HCT116 (cell line): ENCODE measurements at regions of chr1 and their contacts with region 1.

Region 1: GRCh38 chr1:241895013-241895412 is 47.0 kb downstream of the EXO1 start:
- DNase-seq: no peak
- ATAC-seq: no peak
- H3K4me3 ChIP-seq: no peak overlapping the region
- H3K27ac ChIP-seq: no peak overlapping the region
- H3K4me1 ChIP-seq: no peaks in the 10 kb centered on the region
- H3K27me3 ChIP-seq: no peaks in the 10 kb centered on the region
- CTCF ChIP-seq: no peak
- POLR2A ChIP-seq: no peak
- RAD21 ChIP-seq: no peak

Region 2: DNA sequence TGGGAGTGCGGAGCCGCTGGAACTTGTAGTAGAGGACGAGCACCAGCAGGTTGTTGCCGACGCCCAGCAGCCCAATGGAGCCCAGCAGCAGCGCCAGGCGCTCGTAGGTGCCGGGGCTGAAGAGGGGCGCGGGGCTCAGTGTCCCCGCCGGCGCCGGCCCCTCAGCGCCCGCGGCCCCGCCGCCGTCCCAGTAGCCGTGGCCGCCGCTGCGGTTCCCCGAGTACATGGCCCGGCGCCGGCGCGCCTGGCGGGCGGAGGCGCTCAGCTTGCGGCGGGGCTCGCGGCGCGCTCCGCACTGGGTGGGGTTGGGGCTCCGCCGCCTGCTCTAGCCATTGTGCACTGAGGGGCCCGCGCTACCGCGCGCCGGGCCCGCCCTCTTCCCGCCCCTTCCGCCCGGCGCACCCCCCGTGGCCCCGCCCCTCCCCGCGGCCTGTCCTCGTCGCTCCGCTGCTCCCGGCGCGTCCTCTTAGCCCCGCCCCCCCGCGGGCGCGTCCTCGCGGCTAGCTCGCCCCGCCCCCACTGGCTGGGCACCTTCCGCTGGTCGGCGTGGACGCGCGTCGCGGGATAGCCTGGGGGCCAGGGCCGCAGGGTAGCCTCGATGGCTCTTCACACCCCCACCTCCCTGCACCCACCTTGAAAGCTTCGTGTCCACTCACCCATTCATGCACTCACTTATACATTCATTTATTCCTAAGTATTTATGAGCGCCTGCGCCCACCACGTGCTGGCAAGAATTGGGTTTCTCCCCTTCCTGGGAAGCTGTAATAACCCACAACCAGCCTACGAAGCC is 254.8 kb before region 1 on chr1 and contains the starts of genes CHML and OPN3:
- CTCF ChIA-PET with region 1: no interaction called
- POLR2A ChIA-PET with region 1: no interaction called
- RAD21 ChIA-PET with region 1: no interaction called
- intact Hi-C with region 1: no loop called
- DNase-seq: peak; percentile 65
- ATAC-seq: peak; percentile 96
- H3K4me3 ChIP-seq: peak within 1 kb of the TSS; percentile 75 to 88
- H3K27ac ChIP-seq: peak within 1 kb of the TSS; percentile 57
- H3K4me1 ChIP-seq: peaks cover 5 to 29% of the 10 kb centered on the region in 2 experiments; a peak in 3 of 4 replicates
- H3K27me3 ChIP-seq: no peaks in the 10 kb centered on the region
- CTCF ChIP-seq: no peak
- POLR2A ChIP-seq: peak; percentile 65
- RAD21 ChIP-seq: no peak
- total RNA-seq, gene CHML: 9.7 TPM
- total RNA-seq, gene OPN3: 6.1 TPM

Region 3: DNA sequence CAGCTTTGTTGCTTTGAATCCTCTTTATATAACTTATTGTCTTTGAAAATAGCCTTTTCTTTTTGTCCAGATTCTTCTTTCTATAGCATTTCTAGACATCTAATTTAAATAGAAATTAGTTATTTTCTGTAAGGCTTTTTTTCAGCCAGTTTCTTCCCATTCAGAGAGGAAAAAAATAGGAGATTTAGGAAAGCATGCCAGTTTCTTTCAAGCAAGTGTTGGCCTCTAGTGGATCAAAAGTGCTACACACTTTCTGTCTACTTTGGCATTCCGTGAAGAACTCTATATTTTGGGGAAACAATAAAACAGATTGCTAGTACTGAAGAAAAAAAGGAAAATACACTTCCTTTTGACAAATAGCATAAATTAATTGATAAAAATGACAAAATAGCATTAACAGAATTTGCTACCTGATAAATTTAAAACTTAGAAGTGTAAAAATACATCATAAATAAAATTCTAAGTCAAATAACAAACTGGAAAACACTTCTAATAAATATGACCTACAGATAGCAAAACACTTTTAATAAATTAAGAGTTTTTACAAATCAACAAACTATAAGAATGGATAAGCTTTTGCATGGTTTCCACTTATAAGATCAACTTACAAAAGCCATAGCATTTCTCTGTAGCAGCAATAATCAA is 60.2 kb before region 1 on chr1:
- CTCF ChIA-PET with region 1: no interaction called
- POLR2A ChIA-PET with region 1: no interaction called
- RAD21 ChIA-PET with region 1: no interaction called
- intact Hi-C with region 1: no loop called
- DNase-seq: peak; percentile 26
- ATAC-seq: peak; percentile 67
- H3K4me3 ChIP-seq: no peak overlapping the region
- H3K27ac ChIP-seq: no peak overlapping the region
- H3K4me1 ChIP-seq: no peaks in the 10 kb centered on the region
- H3K27me3 ChIP-seq: no peaks in the 10 kb centered on the region
- CTCF ChIP-seq: peak; percentile 63 to 70 (median 66); a peak in 5 of 6 replicates
- POLR2A ChIP-seq: no peak
- RAD21 ChIP-seq: peak; percentile 79

Region 4: GRCh38 chr1:241985787-241986186 is 90.8 kb after region 1 on chr1:
- CTCF ChIA-PET with region 1: interaction called, 28 read pairs
- POLR2A ChIA-PET with region 1: no interaction called
- RAD21 ChIA-PET with region 1: no interaction called
- intact Hi-C with region 1: loop called (anchors 1 kb)
- DNase-seq: peak; percentile 38
- ATAC-seq: peak; percentile 82
- H3K4me3 ChIP-seq: no peak overlapping the region
- H3K27ac ChIP-seq: no peak overlapping the region
- H3K4me1 ChIP-seq: peaks cover 7 to 15% of the 10 kb centered on the region in 2 experiments; a peak in 3 of 4 replicates
- H3K27me3 ChIP-seq: no peaks in the 10 kb centered on the region
- CTCF ChIP-seq: peak; percentile 54 to 69 (median 56); a peak in 5 of 6 replicates
- POLR2A ChIP-seq: no peak
- RAD21 ChIP-seq: peak; percentile 63

Region 5: GRCh38 chr1:241998412-241998921 is 103.5 kb after region 1 on chr1:
- CTCF ChIA-PET with region 1: interaction called, 14 read pairs
- POLR2A ChIA-PET with region 1: interaction called, 3 read pairs
- RAD21 ChIA-PET with region 1: interaction called in 1 of 2 experiments, 3 read pairs
- intact Hi-C with region 1: loop called (anchors 1 kb)
- DNase-seq: peak; percentile 89
- ATAC-seq: peak; percentile 97
- H3K4me3 ChIP-seq: peak overlapping the region; percentile 25 to 43; a peak in 3 of 4 replicates
- H3K27ac ChIP-seq: peak overlapping the region; percentile 1; the same call in 1 of the 2 replicates
- H3K4me1 ChIP-seq: peaks cover 0 to 10% of the 10 kb centered on the region in 2 experiments; a peak in 3 of 4 replicates
- H3K27me3 ChIP-seq: no peaks in the 10 kb centered on the region
- CTCF ChIP-seq: peak; percentile 80 to 98 (median 96)
- POLR2A ChIP-seq: no peak
- RAD21 ChIP-seq: peak; percentile 55

Region 6: GRCh38 chr1:242017584-242018233 is 122.7 kb after region 1 on chr1:
- CTCF ChIA-PET with region 1: interaction called, 3 read pairs
- POLR2A ChIA-PET with region 1: no interaction called
- RAD21 ChIA-PET with region 1: no interaction called
- intact Hi-C with region 1: loop called (anchors 1 kb)
- DNase-seq: peak; percentile 41
- ATAC-seq: peak; percentile 83
- H3K4me3 ChIP-seq: no peak overlapping the region
- H3K27ac ChIP-seq: no peak overlapping the region
- H3K4me1 ChIP-seq: no peaks in the 10 kb centered on the region
- H3K27me3 ChIP-seq: no peaks in the 10 kb centered on the region
- CTCF ChIP-seq: peak; percentile 65 to 85 (median 76)
- POLR2A ChIP-seq: no peak
- RAD21 ChIP-seq: peak; percentile 75